K562 (cell line): ENCODE measurements at regions of chr6 and their contacts with region 1.

Region 1: GRCh38 chr6:44172731-44173500 is 14.3 kb downstream of the CAPN11 start:
- DNase-seq: peak; percentile 90 to 94 (median 92)
- ATAC-seq: peak; percentile 98
- H3K4me3 ChIP-seq: no peak overlapping the region
- H3K27ac ChIP-seq: no peak overlapping the region
- H3K4me1 ChIP-seq: peaks cover 2 to 25% of the 10 kb centered on the region in 2 experiments; a peak in 3 of 5 replicates
- H3K27me3 ChIP-seq: peaks cover 2 to 21% of the 10 kb centered on the region in 2 experiments; a peak in 2 of 5 replicates
- CTCF ChIP-seq: peak; percentile 96 to 99 (median 98)
- EP300 ChIP-seq: no peak; the same call in 1 of the 2 replicates
- POLR2A ChIP-seq: no peak
- RAD21 ChIP-seq: peak; percentile 97 to 99

Region 2: GRCh38 chr6:44226368-44227146 is 53.6 kb after region 1 on chr6:
- CTCF ChIA-PET with region 1: interaction called, 5 read pairs
- POLR2A ChIA-PET with region 1: interaction called, 4 read pairs
- in situ Hi-C with region 1: no loop called
- intact Hi-C with region 1: loop called (anchors 2 kb)
- DNase-seq: peak; percentile 45 to 74 (median 52)
- ATAC-seq: 0 out of 3 replicates have a peak, but pooled peaks have one; percentile 1
- H3K4me3 ChIP-seq: peak overlapping the region; percentile 26; the same call in 1 of the 2 replicates
- H3K27ac ChIP-seq: peak overlapping the region; percentile 75
- H3K4me1 ChIP-seq: peaks cover 57 to 73% of the 10 kb centered on the region in 2 experiments
- H3K27me3 ChIP-seq: no peaks in the 10 kb centered on the region
- CTCF ChIP-seq: no peak
- EP300 ChIP-seq: no peak
- POLR2A ChIP-seq: no peak
- RAD21 ChIP-seq: no peak

Region 3: GRCh38 chr6:44237813-44238433 is 65.0 kb after region 1 on chr6:
- CTCF ChIA-PET with region 1: interaction called, 26 read pairs
- POLR2A ChIA-PET with region 1: interaction called, 3 read pairs
- in situ Hi-C with region 1: loop called (anchors 5 kb)
- intact Hi-C with region 1: loop called (anchors 1 kb)
- DNase-seq: peak; percentile 90 to 92 (median 90)
- ATAC-seq: peak; percentile 95
- H3K4me3 ChIP-seq: peak overlapping the region; percentile 50
- H3K27ac ChIP-seq: peak overlapping the region; percentile 79
- H3K4me1 ChIP-seq: peaks cover 16 to 26% of the 10 kb centered on the region in 2 experiments; a peak in 4 of 5 replicates
- H3K27me3 ChIP-seq: no peaks in the 10 kb centered on the region
- CTCF ChIP-seq: peak; percentile 93 to 98 (median 95)
- EP300 ChIP-seq: peak; percentile 8; the same call in 1 of the 2 replicates
- POLR2A ChIP-seq: peak; percentile 81
- RAD21 ChIP-seq: peak; percentile 78 to 86

Region 4: DNA sequence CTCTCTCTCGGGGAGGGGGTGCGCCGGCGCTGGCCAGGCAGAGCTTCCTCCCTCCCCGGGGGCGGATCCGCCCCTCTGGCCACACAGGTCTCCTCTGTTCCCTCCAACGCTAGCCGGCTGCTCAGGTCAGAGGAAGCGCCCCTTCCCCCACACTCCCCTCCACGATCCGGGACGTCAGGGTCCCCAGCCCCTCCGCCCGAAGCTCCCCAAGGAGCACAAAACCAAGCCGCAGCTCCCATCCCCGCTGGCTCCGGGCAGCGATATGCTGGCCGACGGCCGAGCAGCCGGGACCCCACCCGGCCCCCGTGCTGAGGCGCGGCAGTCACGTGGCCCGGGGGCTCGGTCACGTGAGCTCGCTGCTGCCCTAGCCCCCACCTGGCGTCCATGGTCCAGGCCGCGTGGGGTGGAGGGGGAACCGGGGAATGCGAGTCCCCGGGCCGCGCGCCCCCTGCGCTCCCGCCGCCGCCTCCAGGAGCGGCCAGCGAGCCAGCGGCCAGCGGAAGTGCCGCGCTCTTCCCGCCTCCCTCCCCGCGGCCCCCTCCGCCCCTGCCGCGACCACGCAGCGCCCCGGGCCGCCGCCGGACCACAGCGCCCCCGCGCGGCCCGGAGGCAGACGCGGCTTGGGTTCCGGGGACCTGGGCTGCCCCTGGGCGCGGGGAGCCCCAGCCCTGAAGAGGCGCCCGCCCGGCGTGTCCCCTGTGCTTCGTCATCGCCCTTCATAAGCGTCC is 84.3 kb after region 1 on chr6 and contains the start of gene SLC35B2:
- CTCF ChIA-PET with region 1: interaction called, 7 read pairs
- POLR2A ChIA-PET with region 1: interaction called, 10 read pairs
- in situ Hi-C with region 1: no loop called
- intact Hi-C with region 1: no loop called
- DNase-seq: peak; percentile 92 to 94 (median 93)
- ATAC-seq: peak; percentile 71
- H3K4me3 ChIP-seq: peak within 1 kb of the TSS; percentile 81
- H3K27ac ChIP-seq: peak within 1 kb of the TSS; percentile 93
- H3K4me1 ChIP-seq: peaks cover 32 to 45% of the 10 kb centered on the region in 2 experiments; a peak in 4 of 5 replicates
- H3K27me3 ChIP-seq: no peaks in the 10 kb centered on the region
- CTCF ChIP-seq: peak; percentile 70 to 90 (median 78); a peak in 5 of 6 replicates
- EP300 ChIP-seq: peak; percentile 33
- POLR2A ChIP-seq: peak; percentile 75
- RAD21 ChIP-seq: peak in 1 of 2 experiments; percentile 57; a peak in 3 of 4 replicates
- polyA plus RNA-seq, gene SLC35B2: 14.5 to 19.2 TPM

Region 5: GRCh38 chr6:44275749-44276648 is 103.1 kb after region 1 on chr6:
- CTCF ChIA-PET with region 1: no interaction called
- POLR2A ChIA-PET with region 1: no interaction called
- in situ Hi-C with region 1: no loop called
- intact Hi-C with region 1: no loop called
- DNase-seq: peak in 2 of 4 experiments; percentile 70 to 71
- ATAC-seq: peak; percentile 42
- H3K4me3 ChIP-seq: no peak overlapping the region
- H3K27ac ChIP-seq: no peak overlapping the region
- H3K4me1 ChIP-seq: peaks cover 0 to 26% of the 10 kb centered on the region in 2 experiments; a peak in 2 of 5 replicates
- H3K27me3 ChIP-seq: peaks cover 75 to 92% of the 10 kb centered on the region in 2 experiments
- CTCF ChIP-seq: no peak
- EP300 ChIP-seq: no peak
- POLR2A ChIP-seq: no peak
- RAD21 ChIP-seq: no peak